K562 (cell line): ENCODE measurements at regions of chr3 and their contacts with region 1.

Region 1: GRCh38 chr3:129439817-129440617 is at the starts of genes IFT122 and MBD4:
- DNase-seq: peak; percentile 91 to 98 (median 94)
- ATAC-seq: peak; percentile 91
- H3K4me3 ChIP-seq: peak within 1 kb of the TSS; percentile 76
- H3K27ac ChIP-seq: peak within 1 kb of the TSS; percentile 94
- H3K4me1 ChIP-seq: peaks cover 7 to 41% of the 10 kb centered on the region in 2 experiments
- H3K27me3 ChIP-seq: no peaks in the 10 kb centered on the region
- CTCF ChIP-seq: no peak
- EP300 ChIP-seq: peak; percentile 47; the same call in 1 of the 2 replicates
- POLR2A ChIP-seq: peak; percentile 91
- RAD21 ChIP-seq: 0 out of 4 replicates have a peak, but pooled peaks of 1 of the 2 experiments have one; percentile 9
- polyA plus RNA-seq, gene IFT122: 2.4 to 7.0 TPM
- polyA plus RNA-seq, gene MBD4: 13.3 to 16.6 TPM

Region 2: GRCh38 chr3:129367821-129368220 is 72.2 kb before region 1 on chr3:
- CTCF ChIA-PET with region 1: no interaction called
- POLR2A ChIA-PET with region 1: no interaction called
- in situ Hi-C with region 1: no loop called
- intact Hi-C with region 1: no loop called
- DNase-seq: no peak
- ATAC-seq: no peak
- H3K4me3 ChIP-seq: no peak overlapping the region
- H3K27ac ChIP-seq: no peak overlapping the region
- H3K4me1 ChIP-seq: peaks cover 0 to 22% of the 10 kb centered on the region in 2 experiments; a peak in 3 of 5 replicates
- H3K27me3 ChIP-seq: no peaks in the 10 kb centered on the region
- CTCF ChIP-seq: no peak
- EP300 ChIP-seq: no peak
- POLR2A ChIP-seq: no peak
- RAD21 ChIP-seq: no peak

Region 3: GRCh38 chr3:129383292-129383860 is 56.6 kb before region 1 on chr3:
- CTCF ChIA-PET with region 1: no interaction called
- POLR2A ChIA-PET with region 1: no interaction called
- in situ Hi-C with region 1: no loop called
- intact Hi-C with region 1: loop called (anchors 5 kb)
- DNase-seq: peak; percentile 66 to 76 (median 70)
- ATAC-seq: peak; percentile 96
- H3K4me3 ChIP-seq: no peak overlapping the region
- H3K27ac ChIP-seq: no peak overlapping the region
- H3K4me1 ChIP-seq: peaks cover 0 to 2% of the 10 kb centered on the region in 2 experiments; a peak in 3 of 5 replicates
- H3K27me3 ChIP-seq: no peaks in the 10 kb centered on the region
- CTCF ChIP-seq: peak; percentile 75 to 80 (median 79)
- EP300 ChIP-seq: no peak
- POLR2A ChIP-seq: no peak
- RAD21 ChIP-seq: peak; percentile 64 to 80; a peak in 3 of 4 replicates

Region 4: DNA sequence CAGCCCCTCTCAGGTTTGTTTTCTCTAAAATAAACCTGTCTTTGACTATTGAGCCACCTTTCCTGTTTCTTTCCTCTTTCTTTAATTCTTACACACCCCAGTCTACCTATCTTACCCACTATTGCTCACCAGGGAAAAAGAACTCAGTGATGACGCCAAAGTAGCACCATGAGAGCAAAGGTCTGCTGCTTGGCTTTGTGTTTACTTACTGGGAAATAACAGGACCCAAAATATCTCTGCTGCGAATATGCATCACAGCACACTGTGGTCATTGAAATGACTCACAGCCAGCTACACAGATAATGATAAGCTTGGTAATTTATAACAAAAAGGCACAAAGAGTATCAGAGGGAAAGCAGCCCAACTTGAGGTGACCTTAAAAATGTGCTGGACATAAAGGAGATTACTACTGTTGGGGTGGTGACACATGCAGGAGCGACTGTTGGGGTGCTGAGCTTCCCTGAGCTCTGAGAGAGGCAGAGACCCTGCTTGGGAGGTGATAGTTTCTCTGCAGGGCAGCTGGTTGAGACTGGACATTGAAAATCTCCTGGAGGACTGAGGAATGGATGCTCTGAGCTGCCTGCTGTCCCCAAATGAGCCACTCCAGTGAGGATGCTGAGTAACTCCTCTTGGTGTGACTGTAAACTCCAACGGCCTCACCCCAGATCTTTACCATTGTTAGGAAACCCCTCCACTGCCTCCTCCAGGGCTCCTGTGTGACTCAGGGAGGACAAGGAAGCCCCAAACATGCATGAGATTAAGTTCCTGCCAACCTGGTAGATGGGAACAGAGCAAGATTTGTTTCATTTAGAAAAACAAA is 26.1 kb before region 1 on chr3:
- CTCF ChIA-PET with region 1: interaction called, 3 read pairs
- POLR2A ChIA-PET with region 1: interaction called, 16 read pairs
- in situ Hi-C with region 1: no loop called
- intact Hi-C with region 1: no loop called
- DNase-seq: peak; percentile 32 to 78 (median 50)
- ATAC-seq: peak; percentile 85
- H3K4me3 ChIP-seq: no peak overlapping the region
- H3K27ac ChIP-seq: peak overlapping the region; percentile 68
- H3K4me1 ChIP-seq: peaks cover 27 to 43% of the 10 kb centered on the region in 2 experiments
- H3K27me3 ChIP-seq: no peaks in the 10 kb centered on the region
- CTCF ChIP-seq: no peak
- EP300 ChIP-seq: peak; percentile 76; the same call in 1 of the 2 replicates
- POLR2A ChIP-seq: no peak
- RAD21 ChIP-seq: no peak

Region 5: GRCh38 chr3:129461022-129461421 is 21.0 kb after region 1 on chr3:
- CTCF ChIA-PET with region 1: no interaction called
- POLR2A ChIA-PET with region 1: interaction called, 14 read pairs
- in situ Hi-C with region 1: no loop called
- intact Hi-C with region 1: no loop called
- DNase-seq: peak in 1 of 4 experiments; percentile 23
- ATAC-seq: no peak
- H3K4me3 ChIP-seq: no peak overlapping the region
- H3K27ac ChIP-seq: peak overlapping the region; percentile 99
- H3K4me1 ChIP-seq: peaks cover 14 to 39% of the 10 kb centered on the region in 2 experiments
- H3K27me3 ChIP-seq: no peaks in the 10 kb centered on the region
- CTCF ChIP-seq: no peak
- EP300 ChIP-seq: no peak
- POLR2A ChIP-seq: no peak
- RAD21 ChIP-seq: no peak

Region 6: GRCh38 chr3:130850044-130850797 is 1410.2 kb after region 1 on chr3:
- CTCF ChIA-PET with region 1: no interaction called
- POLR2A ChIA-PET with region 1: no interaction called
- in situ Hi-C with region 1: no loop called
- intact Hi-C with region 1: loop called (anchors 10 kb)
- DNase-seq: peak; percentile 39 to 92 (median 54)
- ATAC-seq: peak; percentile 85
- H3K4me3 ChIP-seq: peak overlapping the region; percentile 33
- H3K27ac ChIP-seq: peak overlapping the region; percentile 94
- H3K4me1 ChIP-seq: peaks cover 9 to 26% of the 10 kb centered on the region in 2 experiments
- H3K27me3 ChIP-seq: no peaks in the 10 kb centered on the region
- CTCF ChIP-seq: no peak
- EP300 ChIP-seq: peak; percentile 92
- POLR2A ChIP-seq: 0 out of 2 replicates have a peak, but pooled peaks have one; percentile 49
- RAD21 ChIP-seq: no peak; a peak in 1 of 4 replicates